ENCODE measurements at regions of chr2 and their contacts with region 1.

Region 1: GRCh38 chr2:216108967-216109921 is at the start of gene XRCC5:
- DNase-seq: peak; percentile 99
- H3K4me3 Mint-ChIP-seq: peak within 1 kb of the TSS; percentile 100
- H3K27ac Mint-ChIP-seq: peak within 1 kb of the TSS; percentile 99
- H3K4me1 Mint-ChIP-seq: peaks cover 45% of the 10 kb centered on the region
- H3K27me3 Mint-ChIP-seq: no peaks in the 10 kb centered on the region
- total RNA-seq, gene XRCC5: 486 to 495 TPM

Region 2: GRCh38 chr2:216013080-216013909 is 95.9 kb before region 1 on chr2 and contains the start of gene MREG:
- CTCF ChIA-PET with region 1: interaction called, 12 read pairs
- intact Hi-C with region 1: no loop called
- DNase-seq: peak; percentile 91
- H3K4me3 Mint-ChIP-seq: peak within 1 kb of the TSS; percentile 81
- H3K27ac Mint-ChIP-seq: no peak within 1 kb of the TSS
- H3K4me1 Mint-ChIP-seq: peaks cover 51% of the 10 kb centered on the region
- H3K27me3 Mint-ChIP-seq: no peaks in the 10 kb centered on the region
- total RNA-seq, gene MREG: 3.1 to 3.9 TPM

Region 3: GRCh38 chr2:216090369-216090786 is 18.9 kb before region 1 on chr2:
- CTCF ChIA-PET with region 1: interaction called, 15 read pairs
- intact Hi-C with region 1: no loop called
- DNase-seq: peak; percentile 30
- H3K4me3 Mint-ChIP-seq: no peak overlapping the region
- H3K27ac Mint-ChIP-seq: peak overlapping the region; percentile 62
- H3K4me1 Mint-ChIP-seq: peaks cover 34% of the 10 kb centered on the region
- H3K27me3 Mint-ChIP-seq: no peaks in the 10 kb centered on the region

Region 4: DNA sequence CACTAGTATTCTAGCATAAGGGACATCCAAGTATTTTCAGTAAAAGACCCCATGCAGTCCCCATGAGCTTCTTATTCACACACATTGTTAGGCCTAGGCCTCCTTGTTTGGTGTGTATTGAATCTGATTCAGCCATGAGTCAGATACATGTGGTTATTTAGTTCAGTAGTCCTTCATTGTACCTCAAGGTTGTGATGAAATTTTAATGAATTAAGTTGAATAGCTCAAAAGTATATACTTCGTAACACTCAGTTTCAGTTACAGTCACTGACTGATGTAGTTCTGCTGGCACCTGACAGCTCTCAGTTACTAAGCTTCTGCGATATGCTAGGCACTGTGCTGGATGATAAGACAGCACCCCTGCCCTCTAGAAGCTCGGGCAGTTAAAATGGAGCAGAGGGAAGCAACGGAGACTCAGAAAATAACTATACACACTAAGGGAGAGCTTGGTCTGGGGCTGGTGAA is 86.4 kb after region 1 on chr2:
- CTCF ChIA-PET with region 1: interaction called, 3 read pairs
- intact Hi-C with region 1: loop called (anchors 1 kb)
- DNase-seq: peak; percentile 61
- H3K4me3 Mint-ChIP-seq: no peak overlapping the region
- H3K27ac Mint-ChIP-seq: peak overlapping the region; percentile 80
- H3K4me1 Mint-ChIP-seq: peaks cover 54% of the 10 kb centered on the region
- H3K27me3 Mint-ChIP-seq: no peaks in the 10 kb centered on the region

Region 5: GRCh38 chr2:216404010-216404618 is 294.9 kb after region 1 on chr2:
- CTCF ChIA-PET with region 1: interaction called, 4 read pairs
- intact Hi-C with region 1: loop called (anchors 1 kb)
- DNase-seq: peak; percentile 71
- H3K4me3 Mint-ChIP-seq: no peak overlapping the region
- H3K27ac Mint-ChIP-seq: no peak overlapping the region
- H3K4me1 Mint-ChIP-seq: no peaks in the 10 kb centered on the region
- H3K27me3 Mint-ChIP-seq: no peaks in the 10 kb centered on the region

Region 6: GRCh38 chr2:216436383-216436782 is 327.1 kb after region 1 on chr2:
- CTCF ChIA-PET with region 1: no interaction called
- intact Hi-C with region 1: no loop called
- DNase-seq: no peak
- H3K4me3 Mint-ChIP-seq: no peak overlapping the region
- H3K27ac Mint-ChIP-seq: no peak overlapping the region
- H3K4me1 Mint-ChIP-seq: no peaks in the 10 kb centered on the region
- H3K27me3 Mint-ChIP-seq: no peaks in the 10 kb centered on the region

Region 7: GRCh38 chr2:216498418-216499413 is 389.5 kb after region 1 on chr2 and contains the start of gene RPL37A:
- CTCF ChIA-PET with region 1: no interaction called
- intact Hi-C with region 1: loop called (anchors 1 kb)
- DNase-seq: peak; percentile 93
- H3K4me3 Mint-ChIP-seq: peak within 1 kb of the TSS; percentile 94
- H3K27ac Mint-ChIP-seq: peak within 1 kb of the TSS; percentile 94
- H3K4me1 Mint-ChIP-seq: peaks cover 51% of the 10 kb centered on the region
- H3K27me3 Mint-ChIP-seq: no peaks in the 10 kb centered on the region
- total RNA-seq, gene RPL37A: 4,869 to 4,871 TPM